ENCODE measurements at regions of chr9 and their contacts with region 1.

Region 1: DNA sequence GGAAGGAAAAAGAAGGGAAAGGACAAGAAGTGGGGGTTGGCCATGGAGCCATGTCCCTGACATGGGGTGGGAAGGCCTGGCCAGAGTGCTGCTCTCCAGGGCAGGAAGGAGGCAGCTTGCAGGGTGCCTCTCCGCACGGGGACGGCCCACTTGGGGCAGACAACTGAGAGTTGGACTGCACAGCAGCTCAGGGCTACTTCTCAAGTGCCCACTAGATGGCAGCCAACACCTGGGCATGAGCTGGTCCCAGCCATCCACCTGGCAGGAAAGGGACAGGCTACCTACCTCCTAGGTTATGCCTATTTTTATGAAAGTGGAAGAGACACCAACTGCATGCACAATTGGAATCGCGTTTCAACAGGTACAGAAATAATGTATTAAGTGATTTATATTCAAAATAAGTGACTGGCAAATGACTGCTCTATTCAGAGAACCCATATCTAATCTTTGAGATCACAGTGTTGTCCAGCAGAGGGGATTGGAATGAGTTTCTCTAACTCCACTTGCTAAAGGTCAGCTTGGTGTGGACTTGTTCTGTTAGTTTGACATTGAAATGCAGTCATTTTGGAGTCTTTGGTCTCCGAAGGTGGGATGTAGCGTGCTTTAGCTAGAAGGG is 113.4 kb downstream of the SYK start:
- DNase-seq: peak; percentile 62 to 80 (median 77)
- H3K4me3 ChIP-seq: no peak overlapping the region
- H3K27ac ChIP-seq: no peak overlapping the region
- H3K4me1 ChIP-seq: no peaks in the 10 kb centered on the region
- H3K27me3 ChIP-seq: no peaks in the 10 kb centered on the region
- CTCF ChIP-seq: peak; percentile 71 to 91 (median 88)
- EP300 ChIP-seq: no peak
- POLR2A ChIP-seq: no peak

Region 2: GRCh38 chr9:91558879-91559278 is 643.9 kb after region 1 on chr9:
- intact Hi-C with region 1: loop called in 1 of 4 experiments (anchors 5 kb)
- DNase-seq: no peak
- H3K4me3 ChIP-seq: no peak overlapping the region
- H3K27ac ChIP-seq: no peak overlapping the region
- H3K4me1 ChIP-seq: no peaks in the 10 kb centered on the region
- H3K27me3 ChIP-seq: no peaks in the 10 kb centered on the region
- CTCF ChIP-seq: no peak
- EP300 ChIP-seq: no peak
- POLR2A ChIP-seq: no peak

Region 3: DNA sequence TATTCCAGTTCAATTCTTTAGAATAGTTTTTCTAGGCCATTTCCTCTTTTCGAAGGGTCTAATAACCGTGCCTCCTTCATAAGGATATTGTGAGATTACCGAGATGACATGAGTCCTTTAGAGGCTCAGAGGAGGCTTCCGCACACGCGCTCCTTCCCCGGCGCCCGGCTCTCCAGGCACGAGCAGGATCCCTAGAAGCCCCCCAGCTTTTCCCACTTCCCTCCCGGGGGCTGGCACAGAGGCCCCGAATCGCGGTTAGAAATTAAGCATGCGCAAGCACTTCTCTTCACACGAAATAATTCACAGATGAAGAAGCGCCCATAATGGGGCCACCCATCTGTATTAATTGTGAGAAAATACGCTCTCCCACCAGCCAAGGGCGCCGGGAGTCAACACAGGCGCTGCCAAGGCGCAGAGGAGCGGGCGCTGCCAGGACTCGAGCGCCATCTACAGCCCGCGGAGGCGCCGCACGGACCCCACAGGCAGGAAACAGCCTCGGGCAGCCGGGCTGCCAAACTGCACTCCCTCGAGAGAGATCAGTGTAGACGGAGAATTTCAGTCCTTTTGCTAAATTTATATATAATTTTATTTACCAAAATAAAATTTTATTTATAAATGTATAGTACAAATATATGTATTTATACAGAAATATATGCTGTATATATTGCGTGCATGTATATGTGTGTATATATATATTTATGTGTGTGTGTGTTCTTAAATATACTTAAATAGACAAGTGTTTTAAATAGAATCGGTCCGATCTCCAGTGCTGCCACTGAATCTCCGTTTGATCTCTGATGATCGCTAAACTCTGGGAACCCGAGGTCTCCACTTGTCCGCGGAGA is 766.7 kb after region 1 on chr9:
- intact Hi-C with region 1: loop called in 2 of 4 experiments (anchors 5 kb)
- DNase-seq: peak; percentile 66 to 87 (median 77)
- H3K4me3 ChIP-seq: no peak overlapping the region
- H3K27ac ChIP-seq: no peak overlapping the region
- H3K4me1 ChIP-seq: no peaks in the 10 kb centered on the region
- H3K27me3 ChIP-seq: no peaks in the 10 kb centered on the region
- CTCF ChIP-seq: peak; percentile 41 to 82 (median 71)
- EP300 ChIP-seq: no peak
- POLR2A ChIP-seq: no peak

Region 4: GRCh38 chr9:91727316-91727861 is 812.4 kb after region 1 on chr9:
- intact Hi-C with region 1: loop called in 1 of 4 experiments (anchors 5 kb)
- DNase-seq: no peak
- H3K4me3 ChIP-seq: no peak overlapping the region
- H3K27ac ChIP-seq: no peak overlapping the region
- H3K4me1 ChIP-seq: peaks cover 3% of the 10 kb centered on the region
- H3K27me3 ChIP-seq: no peaks in the 10 kb centered on the region
- CTCF ChIP-seq: peak in 2 of 3 donors; percentile 46 to 51
- EP300 ChIP-seq: no peak
- POLR2A ChIP-seq: no peak

Measured in ovary (tissue), 10 donors.